A673 (cell line): ENCODE measurements at regions of chr1 and their contacts with region 1.

Region 1: DNA sequence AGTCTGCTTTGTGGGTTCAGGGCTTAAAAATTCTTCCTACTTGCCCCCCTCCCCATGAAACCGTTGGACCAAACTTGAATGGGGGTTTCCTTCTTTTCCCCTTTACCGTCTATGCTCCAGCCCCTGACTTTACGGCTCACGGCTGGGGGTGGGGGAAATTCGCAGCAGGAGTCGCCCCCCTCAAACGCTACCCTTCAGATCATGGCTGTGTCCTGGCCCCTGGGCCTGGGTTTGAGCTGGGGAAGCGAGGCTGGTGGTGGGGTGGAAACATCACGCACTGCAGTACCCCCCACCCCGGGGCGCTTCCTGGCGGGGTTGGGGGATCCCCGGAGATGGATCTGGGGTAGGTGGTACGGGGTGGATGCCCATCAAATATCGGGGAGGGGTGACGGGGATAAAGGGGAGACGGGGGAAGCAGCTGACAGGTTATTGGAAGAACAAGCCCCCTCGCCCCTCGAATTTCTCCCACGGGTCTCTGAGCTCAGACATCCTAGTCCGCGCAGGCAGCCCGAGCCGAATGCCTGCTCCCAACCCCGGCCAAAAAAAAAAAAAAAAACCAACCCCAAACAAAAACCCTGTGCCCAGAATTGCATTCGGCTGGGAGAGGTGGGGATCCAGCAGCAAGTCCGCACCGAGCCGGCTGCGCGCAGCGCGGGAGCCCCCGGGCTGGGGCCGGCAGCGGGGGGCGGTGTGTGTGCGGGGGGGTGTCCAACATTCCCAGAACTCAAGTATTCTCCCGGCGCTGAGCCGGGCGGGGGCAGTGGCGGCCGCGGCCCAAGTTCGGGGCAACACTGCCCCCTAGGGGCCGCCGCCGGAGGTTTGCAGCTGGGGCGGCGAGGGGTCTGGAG is 59.0 kb upstream of the ACOT11 start:
- DNase-seq: peak; percentile 88
- H3K4me3 ChIP-seq: peak overlapping the region; percentile 65
- H3K27ac ChIP-seq: peak overlapping the region; percentile 83
- H3K4me1 ChIP-seq: peaks cover 41% of the 10 kb centered on the region
- H3K27me3 ChIP-seq: no peaks in the 10 kb centered on the region
- CTCF ChIP-seq: peak; percentile 95

Region 2: GRCh38 chr1:53278201-53278725 is 1210.7 kb before region 1 on chr1:
- CTCF ChIA-PET with region 1: interaction called, 18 read pairs
- POLR2A ChIA-PET with region 1: no interaction called
- intact Hi-C with region 1: loop called (anchors 5 kb)
- DNase-seq: peak; percentile 45
- H3K4me3 ChIP-seq: no peak overlapping the region
- H3K27ac ChIP-seq: no peak overlapping the region
- H3K4me1 ChIP-seq: no peaks in the 10 kb centered on the region
- H3K27me3 ChIP-seq: no peaks in the 10 kb centered on the region
- CTCF ChIP-seq: peak; percentile 91

Region 3: DNA sequence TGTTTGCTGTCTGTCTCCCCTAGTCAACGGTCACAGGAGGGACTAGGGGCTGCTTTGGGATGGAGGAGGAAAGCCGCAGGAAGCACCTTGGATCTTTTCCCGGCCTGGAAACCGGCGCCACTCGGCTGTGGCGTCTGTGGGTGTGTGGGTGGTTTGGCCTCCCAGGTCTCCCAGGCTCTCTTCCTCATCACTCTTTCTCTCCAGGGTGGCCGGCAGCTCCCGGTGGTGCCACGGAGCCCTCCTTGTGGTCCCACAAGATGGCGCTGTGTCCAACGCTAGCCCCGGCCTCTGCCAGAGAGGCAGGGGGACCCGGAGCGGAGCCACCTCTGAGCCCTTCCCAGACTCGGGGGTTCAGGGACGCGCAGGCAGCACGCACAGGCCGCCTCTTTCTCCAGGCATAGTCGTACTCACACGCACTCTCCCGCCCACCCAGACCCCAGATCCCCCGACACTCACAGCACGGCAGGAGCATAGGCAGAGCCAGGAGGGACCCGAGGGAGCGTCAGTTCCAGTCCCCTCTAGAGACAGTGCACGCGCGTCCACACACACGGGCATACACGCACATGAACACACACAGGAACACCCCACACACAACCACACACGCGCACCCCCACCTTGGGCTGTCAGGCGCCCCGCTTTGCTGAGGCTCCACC is 367.4 kb before region 1 on chr1:
- CTCF ChIA-PET with region 1: interaction called, 11 read pairs
- POLR2A ChIA-PET with region 1: no interaction called
- intact Hi-C with region 1: loop called (anchors 2 kb)
- DNase-seq: peak; percentile 74
- H3K4me3 ChIP-seq: no peak overlapping the region
- H3K27ac ChIP-seq: no peak overlapping the region
- H3K4me1 ChIP-seq: no peaks in the 10 kb centered on the region
- H3K27me3 ChIP-seq: no peaks in the 10 kb centered on the region
- CTCF ChIP-seq: peak; percentile 71

Region 4: GRCh38 chr1:54273092-54273794 is 215.8 kb before region 1 on chr1:
- CTCF ChIA-PET with region 1: interaction called, 20 read pairs
- POLR2A ChIA-PET with region 1: no interaction called
- intact Hi-C with region 1: no loop called
- DNase-seq: peak; percentile 86
- H3K4me3 ChIP-seq: no peak overlapping the region
- H3K27ac ChIP-seq: peak overlapping the region; percentile 67
- H3K4me1 ChIP-seq: peaks cover 22% of the 10 kb centered on the region
- H3K27me3 ChIP-seq: no peaks in the 10 kb centered on the region
- CTCF ChIP-seq: peak; percentile 64

Region 5: GRCh38 chr1:54499360-54500106 is 10.5 kb after region 1 on chr1:
- CTCF ChIA-PET with region 1: interaction called, 24 read pairs
- POLR2A ChIA-PET with region 1: no interaction called
- intact Hi-C with region 1: no loop called
- DNase-seq: peak; percentile 90
- H3K4me3 ChIP-seq: peak overlapping the region; percentile 46
- H3K27ac ChIP-seq: peak overlapping the region; percentile 32
- H3K4me1 ChIP-seq: peaks cover 17% of the 10 kb centered on the region
- H3K27me3 ChIP-seq: no peaks in the 10 kb centered on the region
- CTCF ChIP-seq: peak; percentile 59

Region 6: DNA sequence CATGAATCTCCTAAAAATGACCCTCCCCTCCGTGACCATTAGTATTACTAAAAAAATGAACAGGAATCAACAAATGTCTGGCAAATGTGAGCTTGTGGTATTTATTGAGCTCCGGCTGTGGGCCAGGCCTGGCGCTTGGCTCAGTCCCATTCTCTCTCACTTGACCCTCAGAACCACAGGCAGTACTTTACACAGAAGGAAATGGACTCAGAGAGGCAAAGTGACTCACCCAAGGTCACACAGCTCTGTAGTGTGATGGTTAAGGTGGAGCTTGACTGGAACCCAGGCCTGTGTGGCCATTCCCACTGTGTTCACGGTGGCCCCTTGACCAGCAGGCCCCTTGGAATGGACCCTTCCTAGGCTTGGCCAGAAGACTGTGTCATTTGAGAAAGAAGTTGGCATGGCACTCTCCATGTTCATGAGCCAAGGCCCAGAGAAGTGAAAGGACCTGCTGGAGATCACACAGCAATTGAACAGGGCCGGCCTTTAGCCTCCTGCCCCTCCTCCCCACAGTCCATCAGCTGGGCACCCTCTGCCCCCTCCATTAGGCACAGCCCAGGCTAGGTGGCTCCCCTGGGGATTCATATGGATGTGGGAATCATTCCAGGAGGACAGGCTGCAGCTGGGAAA is 102.2 kb after region 1 on chr1:
- CTCF ChIA-PET with region 1: no interaction called
- POLR2A ChIA-PET with region 1: no interaction called
- intact Hi-C with region 1: no loop called
- DNase-seq: no peak
- H3K4me3 ChIP-seq: no peak overlapping the region
- H3K27ac ChIP-seq: no peak overlapping the region
- H3K4me1 ChIP-seq: no peaks in the 10 kb centered on the region
- H3K27me3 ChIP-seq: no peaks in the 10 kb centered on the region
- CTCF ChIP-seq: no peak

Region 7: DNA sequence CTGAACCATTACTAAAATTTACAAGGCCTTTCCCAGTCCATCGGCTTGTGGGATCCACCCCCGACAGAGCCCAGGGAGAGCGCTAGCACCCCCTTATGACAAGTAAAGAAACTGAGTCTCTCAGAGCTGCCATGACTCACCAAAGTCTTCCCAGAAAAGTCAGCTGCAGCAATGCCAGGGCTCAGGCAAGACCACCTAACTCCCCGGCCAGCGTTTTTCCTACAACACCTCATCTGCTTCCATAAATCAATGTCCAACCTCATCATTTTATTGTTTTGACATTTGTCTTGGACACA is 383.0 kb after region 1 on chr1:
- CTCF ChIA-PET with region 1: no interaction called
- POLR2A ChIA-PET with region 1: no interaction called
- intact Hi-C with region 1: no loop called
- DNase-seq: no peak
- H3K4me3 ChIP-seq: no peak overlapping the region
- H3K27ac ChIP-seq: no peak overlapping the region
- H3K4me1 ChIP-seq: no peaks in the 10 kb centered on the region
- H3K27me3 ChIP-seq: no peaks in the 10 kb centered on the region
- CTCF ChIP-seq: no peak